Endothelial cell of umbilical vein (primary cell): ENCODE measurements at regions of chr2 and their contacts with region 1.

Region 1: DNA sequence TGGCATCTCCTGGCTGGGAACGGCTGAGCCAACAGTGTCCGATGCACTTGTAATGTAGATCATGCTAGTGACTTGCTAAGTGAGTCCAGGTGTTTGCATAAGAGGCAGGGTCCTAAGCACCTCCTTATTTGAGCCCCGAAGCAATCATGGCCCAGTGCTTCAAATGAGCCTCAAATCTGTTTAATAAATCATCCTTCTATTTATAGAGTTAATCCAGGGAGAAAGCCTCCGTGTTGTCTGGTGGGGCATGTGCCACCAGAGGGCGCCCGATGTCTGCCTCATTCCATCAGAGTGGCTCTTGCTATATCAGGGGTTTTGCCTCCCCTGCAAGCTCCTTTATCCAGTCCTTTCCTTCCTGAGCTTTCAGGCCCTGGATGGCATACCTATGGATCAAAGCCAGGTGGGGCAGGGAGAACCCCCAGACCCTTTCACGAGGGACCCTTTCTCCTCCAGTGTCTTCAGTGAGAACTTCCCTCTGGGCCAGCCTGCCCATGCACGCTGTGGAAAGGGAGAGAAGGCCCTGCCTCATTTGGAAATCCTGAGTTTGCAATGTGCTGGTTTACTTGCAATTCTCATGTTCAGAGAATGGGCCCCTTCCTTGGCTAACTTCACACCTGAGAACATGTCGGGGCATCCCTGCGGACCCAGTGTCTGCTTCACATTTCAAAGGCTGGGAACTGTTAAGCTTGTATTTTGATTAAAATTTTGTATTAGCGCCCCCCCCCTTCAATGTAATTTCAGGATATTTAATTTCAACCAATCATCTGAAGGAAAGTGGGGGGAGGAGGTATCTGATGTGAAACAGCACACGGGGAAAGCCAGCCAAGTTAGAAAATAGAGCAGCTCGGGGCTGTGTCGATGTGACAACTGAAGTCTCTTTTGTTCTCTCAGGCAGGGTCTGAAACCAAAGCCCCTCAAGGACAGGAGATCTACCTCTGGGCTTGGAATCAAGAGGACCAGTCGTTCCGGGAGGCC is 39.7 kb downstream of the RDH14 start:
- DNase-seq: peak; percentile 78
- H3K4me3 ChIP-seq: no peak overlapping the region
- H3K27ac ChIP-seq: no peak overlapping the region
- H3K4me1 ChIP-seq: no peaks in the 10 kb centered on the region
- H3K27me3 ChIP-seq: no peaks in the 10 kb centered on the region
- CTCF ChIP-seq: peak; percentile 84 to 89
- POLR2A ChIP-seq: no peak

Region 2: GRCh38 chr2:17518212-17519154 is 1002.3 kb before region 1 on chr2 and contains the start of gene RAD51AP2:
- CTCF ChIA-PET with region 1: no interaction called
- POLR2A ChIA-PET with region 1: no interaction called
- dilution Hi-C with region 1: no loop called
- intact Hi-C with region 1: no loop called
- DNase-seq: peak; percentile 55
- H3K4me3 ChIP-seq: peak within 1 kb of the TSS; percentile 2 to 40 (median 27)
- H3K27ac ChIP-seq: no peak within 1 kb of the TSS
- H3K4me1 ChIP-seq: peaks cover 2% of the 10 kb centered on the region
- H3K27me3 ChIP-seq: peaks cover 0 to 47% of the 10 kb centered on the region in 2 experiments
- CTCF ChIP-seq: no peak
- POLR2A ChIP-seq: no peak
- total RNA-seq, gene RAD51AP2: not detected in 2 replicates

Region 3: DNA sequence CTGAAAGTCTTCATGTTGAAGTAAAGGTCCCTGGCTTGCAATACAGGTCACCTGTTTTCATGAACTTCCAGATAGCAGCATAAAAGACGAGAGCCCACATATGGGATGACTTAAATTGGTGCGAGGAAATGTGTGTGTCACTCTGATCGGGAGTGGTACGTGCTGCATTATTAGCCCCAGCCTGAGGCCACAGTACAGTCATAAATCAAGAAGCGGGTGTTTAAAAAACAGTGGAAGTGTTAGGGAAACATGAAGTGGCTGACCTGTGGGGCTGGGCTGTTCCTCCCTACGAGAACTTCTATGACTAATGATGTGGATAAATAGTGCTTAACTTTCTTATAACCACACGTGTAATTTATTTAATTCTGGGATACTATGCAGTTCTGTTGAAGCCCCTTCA is 15.4 kb after region 1 on chr2:
- CTCF ChIA-PET with region 1: interaction called, 21 read pairs
- POLR2A ChIA-PET with region 1: no interaction called
- dilution Hi-C with region 1: no loop called
- intact Hi-C with region 1: no loop called
- DNase-seq: peak; percentile 72
- H3K4me3 ChIP-seq: no peak overlapping the region
- H3K27ac ChIP-seq: no peak overlapping the region
- H3K4me1 ChIP-seq: peaks cover 5% of the 10 kb centered on the region
- H3K27me3 ChIP-seq: no peaks in the 10 kb centered on the region
- CTCF ChIP-seq: no peak
- POLR2A ChIP-seq: no peak

Region 4: GRCh38 chr2:18566145-18566769 is 45.5 kb after region 1 on chr2:
- CTCF ChIA-PET with region 1: no interaction called
- POLR2A ChIA-PET with region 1: no interaction called
- dilution Hi-C with region 1: no loop called
- intact Hi-C with region 1: no loop called
- DNase-seq: no peak
- H3K4me3 ChIP-seq: no peak overlapping the region
- H3K27ac ChIP-seq: no peak overlapping the region
- H3K4me1 ChIP-seq: no peaks in the 10 kb centered on the region
- H3K27me3 ChIP-seq: no peaks in the 10 kb centered on the region
- CTCF ChIP-seq: no peak
- POLR2A ChIP-seq: no peak

Region 5: DNA sequence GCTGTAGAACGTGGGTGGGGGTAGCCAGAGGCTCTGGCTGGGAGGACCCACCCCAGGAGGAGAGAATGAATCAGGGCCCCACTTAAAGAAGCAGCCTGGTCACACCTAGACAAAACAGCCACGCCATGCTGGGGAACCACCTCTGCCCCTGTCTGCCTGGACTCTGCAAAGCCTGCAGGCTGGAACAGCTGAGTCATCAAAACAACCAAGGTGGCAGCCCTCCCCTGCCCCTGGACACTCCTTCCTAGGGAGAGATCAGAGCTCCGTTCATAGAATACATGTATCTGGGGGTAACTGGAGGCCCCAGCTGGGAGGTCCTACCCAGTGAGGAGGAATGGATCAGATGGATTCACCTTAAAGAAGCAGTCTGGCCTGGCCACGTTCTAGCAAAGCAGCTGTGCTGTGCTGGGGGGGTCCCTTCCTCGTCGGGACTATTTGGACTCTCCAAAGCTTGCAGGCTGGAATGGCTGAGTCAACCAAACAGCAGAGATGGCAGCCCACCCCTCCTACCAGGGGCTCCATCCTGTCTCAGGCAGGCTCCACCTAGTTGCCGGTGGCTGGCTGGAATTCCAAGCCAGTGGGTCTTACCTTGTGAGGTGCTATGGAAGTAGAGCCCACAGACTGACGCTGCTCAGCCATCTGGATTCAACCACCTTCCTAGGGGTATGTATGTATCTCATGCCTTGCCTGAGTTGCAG is 119.2 kb after region 1 on chr2:
- CTCF ChIA-PET with region 1: no interaction called
- POLR2A ChIA-PET with region 1: no interaction called
- dilution Hi-C with region 1: no loop called
- intact Hi-C with region 1: no loop called
- DNase-seq: no peak
- H3K4me3 ChIP-seq: no peak overlapping the region
- H3K27ac ChIP-seq: no peak overlapping the region
- H3K4me1 ChIP-seq: no peaks in the 10 kb centered on the region
- H3K27me3 ChIP-seq: no peaks in the 10 kb centered on the region
- CTCF ChIP-seq: no peak
- POLR2A ChIP-seq: no peak

Region 6: DNA sequence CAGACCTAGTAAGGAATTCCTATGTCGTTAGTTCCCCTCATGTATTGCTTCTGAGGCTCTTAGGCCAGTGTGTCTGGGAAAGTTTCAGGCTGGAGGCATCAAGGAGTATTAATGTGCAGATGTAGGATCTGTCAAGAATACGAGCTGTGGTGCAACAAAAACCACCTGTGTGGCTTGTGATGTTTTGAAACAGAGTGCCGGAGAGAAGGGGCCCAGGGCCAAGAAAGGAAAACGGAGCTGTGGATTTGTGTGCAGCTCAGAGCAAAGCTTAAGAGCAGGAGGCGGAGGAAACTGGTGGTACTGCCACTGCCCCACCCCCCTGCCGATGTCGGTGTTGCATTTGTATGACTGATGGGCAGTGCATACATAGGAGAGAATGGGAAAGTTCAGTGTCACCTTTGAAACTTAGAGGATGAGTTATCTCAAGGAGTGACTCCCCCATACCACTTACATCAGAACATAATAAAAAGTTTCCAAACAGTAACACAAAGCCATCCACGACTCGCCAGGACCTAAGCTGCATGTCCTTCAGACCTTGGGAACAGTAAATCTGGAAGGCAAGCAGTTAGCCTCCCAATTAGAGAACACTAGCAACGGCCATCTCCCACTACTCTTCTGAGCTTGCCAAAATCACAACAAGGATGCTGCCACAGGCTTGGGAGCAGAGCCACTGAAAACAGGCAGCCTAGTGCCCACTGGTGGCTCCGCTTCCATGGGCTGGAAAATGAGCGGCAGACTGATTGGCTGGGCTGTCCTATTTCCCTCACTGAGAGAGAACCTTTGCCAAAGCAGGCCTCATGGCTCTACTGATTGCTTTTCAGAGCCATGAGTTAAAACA is 221.4 kb after region 1 on chr2:
- CTCF ChIA-PET with region 1: interaction called, 20 read pairs
- POLR2A ChIA-PET with region 1: no interaction called
- dilution Hi-C with region 1: no loop called
- intact Hi-C with region 1: no loop called
- DNase-seq: no peak
- H3K4me3 ChIP-seq: no peak overlapping the region
- H3K27ac ChIP-seq: no peak overlapping the region
- H3K4me1 ChIP-seq: no peaks in the 10 kb centered on the region
- H3K27me3 ChIP-seq: no peaks in the 10 kb centered on the region
- CTCF ChIP-seq: no peak
- POLR2A ChIP-seq: no peak

Region 7: DNA sequence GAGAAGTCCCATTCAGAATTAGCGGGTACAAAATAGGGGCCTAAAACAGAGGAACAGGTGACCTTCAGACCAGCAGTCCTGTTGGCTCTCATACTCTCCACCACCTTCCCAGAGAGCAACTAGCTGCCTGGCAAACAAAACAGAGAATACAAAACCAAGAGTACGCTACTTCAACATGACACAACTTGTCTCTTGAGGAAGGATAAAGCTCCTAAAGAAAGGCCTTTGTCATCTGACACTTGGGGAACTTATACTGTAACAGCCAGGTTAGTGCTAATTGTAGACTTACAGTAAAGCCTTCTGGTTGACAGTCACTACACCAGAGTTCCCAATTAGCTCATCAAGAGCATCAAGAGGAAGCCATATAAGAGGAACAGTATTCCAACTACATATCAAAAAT is 350.7 kb after region 1 on chr2:
- CTCF ChIA-PET with region 1: no interaction called
- POLR2A ChIA-PET with region 1: no interaction called
- dilution Hi-C with region 1: no loop called
- intact Hi-C with region 1: loop called (anchors 10 kb)
- DNase-seq: no peak
- H3K4me3 ChIP-seq: no peak overlapping the region
- H3K27ac ChIP-seq: no peak overlapping the region
- H3K4me1 ChIP-seq: no peaks in the 10 kb centered on the region
- H3K27me3 ChIP-seq: no peaks in the 10 kb centered on the region
- CTCF ChIP-seq: no peak
- POLR2A ChIP-seq: no peak

Region 8: GRCh38 chr2:19377717-19378116 is 857.0 kb after region 1 on chr2:
- CTCF ChIA-PET with region 1: interaction called, 10 read pairs
- POLR2A ChIA-PET with region 1: no interaction called
- dilution Hi-C with region 1: no loop called
- intact Hi-C with region 1: no loop called
- DNase-seq: no peak
- H3K4me3 ChIP-seq: no peak overlapping the region
- H3K27ac ChIP-seq: no peak overlapping the region
- H3K4me1 ChIP-seq: no peaks in the 10 kb centered on the region
- H3K27me3 ChIP-seq: peaks cover 0 to 3% of the 10 kb centered on the region in 2 experiments
- CTCF ChIP-seq: no peak
- POLR2A ChIP-seq: no peak